ENCODE measurements at regions of chr2 and their contacts with region 1.

Region 1: DNA sequence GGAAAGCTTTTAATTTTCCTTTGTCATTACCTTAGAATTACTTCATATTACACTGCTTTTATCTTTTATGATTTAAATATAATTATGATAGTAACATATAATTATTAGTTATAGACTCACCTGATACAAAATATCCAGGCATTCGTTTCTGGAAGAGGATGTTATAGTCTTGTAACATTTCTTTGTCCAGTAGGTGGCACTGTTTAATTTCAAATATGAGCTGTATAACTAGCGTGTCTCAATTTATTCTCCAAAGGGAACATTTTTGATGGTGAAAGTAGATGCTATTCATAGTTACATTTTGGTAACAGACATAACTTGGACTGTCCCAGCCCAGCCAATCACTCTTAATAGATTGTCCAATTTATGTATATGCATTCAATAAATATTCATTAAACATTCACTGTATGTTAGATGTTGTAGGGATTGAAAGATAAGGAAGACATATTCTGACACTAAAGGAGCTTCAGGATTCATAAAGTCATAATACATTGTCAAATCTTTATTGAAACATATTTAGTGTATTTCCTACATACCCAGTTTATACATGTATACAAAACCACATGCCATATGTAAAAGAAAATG is 19.2 kb downstream of the DAW1 start:
- DNase-seq: peak in 5 of 9 donors; percentile 8 to 31 (median 16)
- ATAC-seq: peak; percentile 52
- H3K4me3 ChIP-seq: no peak overlapping the region
- H3K4me3 Mint-ChIP-seq: no peak overlapping the region
- H3K27ac ChIP-seq: no peak overlapping the region
- H3K27ac Mint-ChIP-seq: no peak overlapping the region
- H3K4me1 ChIP-seq: no peaks in the 10 kb centered on the region
- H3K4me1 Mint-ChIP-seq: no peaks in the 10 kb centered on the region
- H3K27me3 ChIP-seq: no peaks in the 10 kb centered on the region
- H3K27me3 Mint-ChIP-seq: peaks cover 0 to 10% (median 4%) of the 10 kb centered on the region in 5 donors

Region 2: DNA sequence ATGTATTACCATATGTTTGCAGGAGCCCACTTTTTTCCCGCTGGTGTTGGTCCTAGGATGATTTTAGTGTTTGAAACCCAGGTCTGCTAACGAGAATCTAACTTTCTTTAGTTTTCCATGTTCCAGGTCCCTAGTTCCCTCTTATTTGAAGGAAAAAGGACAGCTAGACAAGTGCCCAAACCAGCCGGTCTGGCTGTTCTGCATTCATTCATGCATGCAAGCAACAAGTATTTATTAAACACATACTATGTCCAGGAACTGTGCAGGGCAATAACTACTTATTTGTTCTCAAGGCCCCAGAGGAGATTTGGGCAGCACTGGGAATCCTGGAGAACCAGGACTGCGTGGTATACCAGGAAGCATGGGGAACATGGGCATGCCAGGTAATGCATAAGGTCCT is 600.9 kb before region 1 on chr2:
- CTCF ChIA-PET with region 1: no interaction called
- POLR2A ChIA-PET with region 1: no interaction called
- intact Hi-C with region 1: no loop called
- DNase-seq: no peak
- ATAC-seq: no peak
- H3K4me3 ChIP-seq: no peak overlapping the region
- H3K4me3 Mint-ChIP-seq: no peak overlapping the region
- H3K27ac ChIP-seq: no peak overlapping the region
- H3K27ac Mint-ChIP-seq: no peak overlapping the region
- H3K4me1 ChIP-seq: no peaks in the 10 kb centered on the region
- H3K4me1 Mint-ChIP-seq: peaks cover 0 to 6% (median 0%) of the 10 kb centered on the region in 7 donors
- H3K27me3 ChIP-seq: no peaks in the 10 kb centered on the region
- H3K27me3 Mint-ChIP-seq: no peaks in the 10 kb centered on the region

Region 3: GRCh38 chr2:227528803-227529202 is 361.8 kb before region 1 on chr2:
- CTCF ChIA-PET with region 1: no interaction called
- POLR2A ChIA-PET with region 1: no interaction called
- intact Hi-C with region 1: no loop called
- DNase-seq: no peak
- ATAC-seq: no peak
- H3K4me3 ChIP-seq: no peak overlapping the region
- H3K4me3 Mint-ChIP-seq: no peak overlapping the region
- H3K27ac ChIP-seq: no peak overlapping the region
- H3K27ac Mint-ChIP-seq: peak overlapping the region in 4 of 9 donors; percentile 1 to 61 (median 12)
- H3K4me1 ChIP-seq: no peaks in the 10 kb centered on the region
- H3K4me1 Mint-ChIP-seq: peaks cover 0 to 17% (median 5%) of the 10 kb centered on the region in 7 donors
- H3K27me3 ChIP-seq: no peaks in the 10 kb centered on the region
- H3K27me3 Mint-ChIP-seq: no peaks in the 10 kb centered on the region

Region 4: GRCh38 chr2:229586746-229587705 is 1696.4 kb after region 1 on chr2:
- CTCF ChIA-PET with region 1: no interaction called
- POLR2A ChIA-PET with region 1: no interaction called
- intact Hi-C with region 1: loop called (anchors 5 kb)
- DNase-seq: peak in 1 of 9 donors; percentile 28
- ATAC-seq: peak; percentile 63
- H3K4me3 ChIP-seq: no peak overlapping the region
- H3K4me3 Mint-ChIP-seq: no peak overlapping the region
- H3K27ac ChIP-seq: no peak overlapping the region
- H3K27ac Mint-ChIP-seq: no peak overlapping the region
- H3K4me1 ChIP-seq: no peaks in the 10 kb centered on the region
- H3K4me1 Mint-ChIP-seq: peaks cover 0 to 6% (median 0%) of the 10 kb centered on the region in 7 donors
- H3K27me3 ChIP-seq: no peaks in the 10 kb centered on the region
- H3K27me3 Mint-ChIP-seq: peaks cover 17 to 51% (median 28%) of the 10 kb centered on the region in 5 donors

Region 5: GRCh38 chr2:229714736-229715541 is 1824.4 kb after region 1 on chr2:
- CTCF ChIA-PET with region 1: no interaction called
- POLR2A ChIA-PET with region 1: no interaction called
- intact Hi-C with region 1: loop called in 1 of 2 experiments (anchors 2 kb)
- DNase-seq: peak in 4 of 9 donors; percentile 5 to 48 (median 6)
- ATAC-seq: peak; percentile 36
- H3K4me3 ChIP-seq: no peak overlapping the region
- H3K4me3 Mint-ChIP-seq: peak overlapping the region in 9 of 10 donors; percentile 33 to 76 (median 58)
- H3K27ac ChIP-seq: no peak overlapping the region
- H3K27ac Mint-ChIP-seq: no peak overlapping the region
- H3K4me1 ChIP-seq: peaks cover 4 to 10% of the 10 kb centered on the region in 2 donors
- H3K4me1 Mint-ChIP-seq: peaks cover 0 to 23% (median 13%) of the 10 kb centered on the region in 7 donors
- H3K27me3 ChIP-seq: peaks cover 6 to 15% of the 10 kb centered on the region in 2 donors
- H3K27me3 Mint-ChIP-seq: peaks cover 61 to 83% (median 69%) of the 10 kb centered on the region in 5 donors